Ascending aorta (tissue), 2 donors: ENCODE measurements at regions of chr20 and their contacts with region 1.

Region 1: GRCh38 chr20:41173161-41173721 is 35.9 kb downstream of the PLCG1 start:
- DNase-seq: peak; percentile 40 to 91
- H3K4me3 ChIP-seq: no peak overlapping the region
- H3K27ac ChIP-seq: peak overlapping the region; percentile 82 to 83
- H3K4me1 ChIP-seq: peaks cover 8 to 54% of the 10 kb centered on the region in 2 donors
- H3K27me3 ChIP-seq: no peaks in the 10 kb centered on the region
- CTCF ChIP-seq: peak; percentile 86 to 96 (median 90)

Region 2: DNA sequence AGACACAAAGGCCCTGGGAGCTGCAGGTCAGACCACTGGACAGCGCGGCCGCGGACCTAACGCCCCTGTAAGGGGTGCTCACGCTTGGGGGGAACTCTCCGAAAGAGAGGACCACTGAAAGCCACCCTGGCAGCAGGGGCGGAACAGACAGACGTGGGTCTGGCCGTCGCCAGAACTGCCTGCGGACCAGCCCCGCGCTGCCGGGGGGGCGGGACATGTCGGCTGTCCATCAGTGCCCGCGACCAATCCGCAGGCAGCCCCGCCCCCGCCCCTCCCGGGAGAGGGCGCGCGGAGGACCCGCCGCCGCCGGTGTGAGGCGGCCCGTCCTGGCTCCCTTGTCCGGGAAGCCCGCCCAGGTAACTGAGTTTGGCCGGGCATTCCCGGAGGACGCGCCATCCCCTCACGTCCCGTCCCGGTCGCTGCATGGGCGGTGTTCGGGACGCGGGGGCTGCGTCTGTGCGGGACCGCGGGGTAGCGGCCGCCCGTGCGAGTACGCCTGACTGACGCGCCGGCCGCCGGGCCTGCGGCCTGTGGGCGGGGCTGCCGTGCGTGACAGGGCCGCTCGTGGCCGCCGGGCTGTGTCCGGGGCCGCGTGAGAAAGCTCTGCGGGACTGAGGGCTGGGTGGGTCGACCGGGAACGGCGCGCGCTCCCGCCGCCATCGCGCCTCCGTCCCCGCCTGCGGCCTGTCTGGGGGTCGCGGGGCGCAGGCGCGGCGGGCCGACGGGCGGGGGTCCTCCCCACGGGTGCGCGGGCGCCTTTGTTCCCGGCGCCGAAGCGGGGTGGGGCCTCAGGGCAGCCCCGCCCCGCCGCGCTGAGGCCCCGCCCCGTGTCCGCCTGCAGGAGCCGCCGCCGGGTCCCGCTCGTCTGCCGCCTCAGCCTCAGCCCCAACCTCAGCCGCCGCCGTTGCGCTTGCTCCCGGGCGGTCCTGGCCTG is 36.3 kb before region 1 on chr20 and contains the start of gene PLCG1:
- intact Hi-C with region 1: loop called (anchors 2 kb)
- DNase-seq: peak; percentile 46 to 94
- H3K4me3 ChIP-seq: peak within 1 kb of the TSS; percentile 86 to 99
- H3K27ac ChIP-seq: peak within 1 kb of the TSS; percentile 98
- H3K4me1 ChIP-seq: peaks cover 0 to 35% of the 10 kb centered on the region in 2 donors
- H3K27me3 ChIP-seq: no peaks in the 10 kb centered on the region
- CTCF ChIP-seq: peak in 1 of 3 experiments; percentile 20
- total RNA-seq, gene PLCG1: 168 TPM

Region 3: DNA sequence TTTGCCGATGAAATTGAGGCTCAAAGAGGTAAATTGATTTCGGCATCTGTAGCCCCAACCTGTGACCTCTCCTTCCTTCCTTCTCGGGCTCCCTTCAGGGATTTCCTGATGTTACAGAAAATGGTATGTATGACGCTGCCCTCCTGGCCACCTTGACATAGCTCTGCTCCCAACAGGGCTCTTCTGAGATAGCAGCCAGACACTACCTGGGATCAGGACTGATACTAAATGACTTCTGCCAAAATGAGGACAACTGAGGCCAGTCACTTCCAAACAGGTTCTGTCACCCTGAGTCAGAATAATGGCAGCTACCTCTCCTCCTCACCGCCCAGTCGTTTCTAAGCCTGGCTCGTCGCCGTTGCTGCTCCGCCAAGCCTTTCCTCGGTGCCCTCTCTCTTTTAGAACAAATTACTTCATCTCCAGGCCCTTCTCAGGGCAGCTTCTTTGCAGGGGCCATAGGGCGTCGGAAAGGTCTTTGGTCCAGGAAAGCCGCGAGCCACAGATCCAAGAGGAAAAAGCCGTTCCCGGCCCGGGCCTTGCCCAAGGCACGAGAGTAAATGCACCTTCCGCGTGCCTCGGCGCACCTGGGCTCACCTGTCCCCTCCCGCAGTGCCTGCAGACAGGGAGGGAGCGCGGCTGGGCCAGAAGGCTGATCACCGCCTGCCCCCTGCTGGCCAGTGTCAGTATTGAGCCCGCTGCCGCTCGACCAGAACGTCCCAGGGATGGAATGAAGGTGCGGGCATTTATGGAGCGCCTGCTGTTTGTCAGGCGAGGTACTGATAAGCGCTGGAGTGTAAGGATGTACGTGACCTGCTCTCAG is 166.5 kb after region 1 on chr20:
- intact Hi-C with region 1: loop called (anchors 1 kb)
- DNase-seq: peak in 1 of 2 donors; percentile 91
- H3K4me3 ChIP-seq: peak overlapping the region; percentile 48 to 55
- H3K27ac ChIP-seq: peak overlapping the region; percentile 81 to 82
- H3K4me1 ChIP-seq: peaks cover 4 to 9% of the 10 kb centered on the region in 2 donors
- H3K27me3 ChIP-seq: no peaks in the 10 kb centered on the region
- CTCF ChIP-seq: peak; percentile 98 to 99 (median 99)